ENCODE measurements at regions of chr7 and their contacts with region 1.

Region 1: DNA sequence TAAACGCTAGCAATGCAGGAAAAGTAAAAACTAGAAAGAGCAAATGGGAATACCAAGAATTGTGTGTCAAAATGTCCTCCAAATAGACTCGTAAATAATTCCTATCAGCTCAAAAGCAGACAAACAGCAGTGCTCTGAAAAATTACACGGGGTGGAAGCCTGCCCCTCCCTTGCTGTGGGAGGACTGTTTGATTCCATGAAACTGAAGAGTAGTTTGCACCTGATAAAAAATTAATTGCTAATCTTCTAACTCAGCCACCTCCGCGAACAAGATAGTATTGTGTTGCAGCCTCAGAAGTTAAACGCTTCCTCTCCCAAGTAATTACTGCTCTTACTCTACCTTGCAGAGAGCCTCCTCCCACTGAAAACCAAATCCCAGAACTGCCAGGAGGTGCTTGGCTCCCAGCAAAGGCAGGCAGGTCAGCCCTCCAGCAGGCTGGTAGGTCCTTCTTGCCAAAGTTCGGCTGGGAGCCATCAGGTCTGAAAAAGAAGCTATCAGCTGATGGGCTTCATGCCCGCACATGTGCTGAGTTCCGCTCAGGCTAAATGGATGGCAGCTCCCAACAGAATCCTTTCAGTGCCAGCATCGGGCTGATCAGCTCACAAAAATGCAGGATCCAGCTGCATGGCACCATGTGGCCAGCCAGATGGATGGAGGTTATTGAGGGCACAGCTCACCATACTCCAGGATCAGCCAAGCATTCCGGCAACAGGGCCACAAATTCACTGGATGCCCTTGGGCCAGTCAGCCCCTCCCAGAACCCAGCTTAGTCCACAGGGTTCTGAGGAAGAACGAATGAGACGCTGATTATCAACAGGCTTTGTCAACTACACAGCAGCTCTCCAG is 37.1 kb downstream of the MAD1L1 start:
- DNase-seq: no peak
- H3K4me3 ChIP-seq: no peak overlapping the region
- H3K27ac ChIP-seq: no peak overlapping the region
- H3K4me1 ChIP-seq: no peaks in the 10 kb centered on the region
- H3K27me3 ChIP-seq: no peaks in the 10 kb centered on the region
- CTCF ChIP-seq: no peak

Region 2: DNA sequence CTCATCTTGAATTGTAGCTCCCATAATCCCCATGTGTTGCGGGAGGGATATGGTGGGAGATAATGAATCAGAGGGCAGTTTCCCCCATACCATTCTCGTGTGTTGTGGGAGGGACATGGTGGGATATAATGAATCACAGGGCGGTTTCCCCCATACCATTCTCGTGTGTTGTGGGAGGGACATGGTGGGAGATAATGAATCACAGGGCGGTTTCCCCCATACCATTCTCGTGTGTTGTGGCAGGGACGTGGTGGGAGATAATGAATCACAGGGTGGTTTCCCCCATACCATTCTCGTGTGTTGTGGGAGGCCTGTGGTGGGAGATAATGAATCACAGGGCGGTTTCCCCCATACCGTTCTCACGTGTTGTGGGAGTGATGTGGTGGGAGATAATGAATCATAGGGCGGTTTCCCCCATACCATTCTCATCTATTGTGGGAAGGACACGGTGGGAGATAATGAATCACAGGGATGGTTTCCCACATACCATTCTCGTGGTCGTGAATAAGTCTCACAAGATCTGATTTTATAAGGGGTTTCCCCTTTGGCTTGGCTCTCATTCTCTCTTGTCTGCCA is 233.8 kb before region 1 on chr7:
- CTCF ChIA-PET with region 1: no interaction called
- POLR2A ChIA-PET with region 1: no interaction called
- intact Hi-C with region 1: no loop called
- DNase-seq: peak in 1 of 2 experiments; percentile 43
- H3K4me3 ChIP-seq: no peak overlapping the region
- H3K27ac ChIP-seq: peak overlapping the region; percentile 60
- H3K4me1 ChIP-seq: no peaks in the 10 kb centered on the region
- H3K27me3 ChIP-seq: no peaks in the 10 kb centered on the region
- CTCF ChIP-seq: no peak

Region 3: GRCh38 chr7:2138146-2138765 is 57.4 kb before region 1 on chr7:
- CTCF ChIA-PET with region 1: no interaction called
- POLR2A ChIA-PET with region 1: no interaction called
- intact Hi-C with region 1: no loop called
- DNase-seq: no peak
- H3K4me3 ChIP-seq: no peak overlapping the region
- H3K27ac ChIP-seq: no peak overlapping the region
- H3K4me1 ChIP-seq: no peaks in the 10 kb centered on the region
- H3K27me3 ChIP-seq: no peaks in the 10 kb centered on the region
- CTCF ChIP-seq: no peak

Region 4: GRCh38 chr7:2157468-2158279 is 37.9 kb before region 1 on chr7:
- CTCF ChIA-PET with region 1: interaction called, 10 read pairs
- POLR2A ChIA-PET with region 1: no interaction called
- intact Hi-C with region 1: no loop called
- DNase-seq: no peak
- H3K4me3 ChIP-seq: no peak overlapping the region
- H3K27ac ChIP-seq: no peak overlapping the region
- H3K4me1 ChIP-seq: no peaks in the 10 kb centered on the region
- H3K27me3 ChIP-seq: no peaks in the 10 kb centered on the region
- CTCF ChIP-seq: no peak